Lower leg skin (tissue), 4 donors: ENCODE measurements at regions of chr12 and their contacts with region 1.

Region 1: DNA sequence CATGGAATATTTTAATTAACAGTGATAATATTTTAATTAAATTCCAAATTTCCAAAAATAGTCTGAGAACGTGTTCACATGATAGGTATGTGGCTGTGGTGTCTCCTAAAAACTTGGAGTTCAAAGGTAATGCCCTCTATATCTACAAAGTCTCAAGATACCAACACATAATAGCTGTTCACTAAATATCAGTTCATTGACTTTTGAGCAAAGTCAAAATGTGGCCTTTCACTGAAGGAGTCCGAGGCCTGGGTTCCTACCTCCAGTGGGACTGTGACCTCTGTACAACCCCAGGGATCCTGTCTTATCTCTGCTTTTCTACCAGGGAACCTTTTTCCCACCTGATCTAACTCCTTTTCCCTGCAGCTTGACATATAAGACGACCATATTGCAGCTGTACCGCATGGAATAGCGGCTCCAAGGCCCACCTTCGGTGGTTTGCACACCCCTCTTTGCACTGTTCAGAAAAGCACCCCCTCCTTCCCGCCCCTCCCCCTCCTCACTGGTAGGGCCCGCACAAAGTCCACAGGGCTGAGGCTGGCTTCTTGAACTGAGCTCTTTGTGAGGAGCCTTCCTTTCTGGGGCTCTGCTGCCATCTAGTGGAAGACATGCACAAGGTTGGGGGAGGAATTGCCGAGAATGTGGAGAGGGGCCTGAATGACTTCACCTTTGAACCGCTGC is 3.1 kb downstream of the CCND2 start:
- DNase-seq: peak; percentile 79 to 96
- H3K4me3 ChIP-seq: no peak overlapping the region
- CTCF ChIP-seq: peak in 1 of 3 donors; percentile 39
- POLR2A ChIP-seq: no peak

Region 2: DNA sequence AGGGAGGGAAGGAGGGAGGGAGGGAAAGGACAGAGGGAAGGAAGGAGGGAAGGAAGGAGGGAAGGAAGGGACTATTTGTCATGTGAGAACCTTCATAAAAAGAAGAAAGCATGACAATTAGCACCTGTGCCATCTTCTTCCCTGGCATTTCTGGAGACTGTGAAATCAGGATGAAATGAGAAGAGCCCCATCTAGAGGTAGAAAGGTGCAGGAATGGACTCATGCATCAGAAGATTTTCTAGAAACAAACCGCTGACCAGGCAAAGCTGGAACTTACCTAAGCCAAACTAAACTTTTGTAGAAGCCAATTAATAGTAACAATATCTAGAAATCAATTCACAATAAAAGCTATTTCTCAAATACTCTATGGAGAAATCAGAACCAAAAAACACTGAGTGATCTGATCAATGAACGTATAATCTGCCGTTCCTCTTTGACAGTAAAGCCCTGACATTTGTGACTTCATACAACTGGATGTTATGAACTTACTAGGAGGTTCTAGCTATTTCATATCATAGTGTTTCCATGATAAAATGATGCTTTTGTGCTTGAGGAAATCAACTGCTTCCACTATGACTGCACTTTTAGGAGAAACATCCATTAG is 499.4 kb before region 1 on chr12:
- intact Hi-C with region 1: loop called (anchors 10 kb)
- DNase-seq: no peak
- H3K4me3 ChIP-seq: no peak overlapping the region
- CTCF ChIP-seq: no peak
- POLR2A ChIP-seq: no peak

Region 3: GRCh38 chr12:3885277-3886094 is 391.2 kb before region 1 on chr12:
- intact Hi-C with region 1: loop called (anchors 5 kb)
- DNase-seq: no peak
- H3K4me3 ChIP-seq: no peak overlapping the region
- CTCF ChIP-seq: no peak
- POLR2A ChIP-seq: no peak

Region 4: GRCh38 chr12:3998968-3999826 is 277.5 kb before region 1 on chr12:
- intact Hi-C with region 1: loop called (anchors 10 kb)
- DNase-seq: peak in 1 of 2 donors; percentile 32
- H3K4me3 ChIP-seq: no peak overlapping the region
- CTCF ChIP-seq: no peak
- POLR2A ChIP-seq: no peak